ENCODE measurements at regions of chr5 and their contacts with region 1.

Region 1: GRCh38 chr5:71922584-71923106 is 184.6 kb upstream of the MAP1B start:
- DNase-seq: no peak

Region 2: GRCh38 chr5:71693828-71694427 is 228.7 kb before region 1 on chr5:
- intact Hi-C with region 1: no loop called
- DNase-seq: no peak

Region 3: DNA sequence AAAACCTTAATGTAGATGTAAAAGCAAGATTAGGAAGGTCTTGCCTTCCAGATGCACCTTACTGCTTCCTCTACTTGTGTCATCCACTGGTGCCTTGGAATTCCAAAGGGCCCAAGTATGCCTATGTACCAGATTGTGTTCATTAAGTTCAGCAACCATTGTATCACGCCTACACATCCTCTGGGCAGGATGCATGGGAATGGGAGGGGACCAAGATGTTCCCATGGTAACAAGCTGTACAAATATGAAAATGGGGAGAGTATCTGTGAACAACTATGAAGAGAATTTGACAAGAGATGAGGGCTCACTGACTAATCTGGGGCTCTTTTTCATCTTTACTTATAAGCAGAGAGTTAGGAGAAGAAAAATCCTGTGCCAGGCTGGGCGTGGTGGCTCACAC is 46.8 kb after region 1 on chr5:
- intact Hi-C with region 1: no loop called
- DNase-seq: no peak

Region 4: GRCh38 chr5:72108202-72109061 is 185.8 kb after region 1 on chr5:
- intact Hi-C with region 1: loop called (anchors 5 kb)
- DNase-seq: peak; percentile 88

Measured in cardiac septum (tissue), 1 donor.